Adrenal gland (tissue), 19 donors: ENCODE measurements at regions of chr13 and their contacts with region 1.

Region 1: GRCh38 chr13:21476893-21477472 is 17.9 kb upstream of the ZDHHC20 start:
- DNase-seq: peak; percentile 81 to 93 (median 87)
- H3K4me3 ChIP-seq: peak overlapping the region in 3 of 4 donors; percentile 6 to 56 (median 28)
- H3K27ac ChIP-seq: peak overlapping the region in 1 of 5 donors; percentile 40
- H3K4me1 ChIP-seq: peaks cover 0 to 8% of the 10 kb centered on the region in 2 donors
- H3K27me3 ChIP-seq: no peaks in the 10 kb centered on the region
- CTCF ChIP-seq: peak in 5 of 6 experiments; percentile 89 to 99 (median 96)
- POLR2A ChIP-seq: no peak

Region 2: GRCh38 chr13:20940083-20940880 is 536.7 kb before region 1 on chr13:
- intact Hi-C with region 1: loop called (anchors 5 to 10 kb)
- DNase-seq: no peak
- H3K4me3 ChIP-seq: no peak overlapping the region
- H3K27ac ChIP-seq: no peak overlapping the region
- H3K4me1 ChIP-seq: no peaks in the 10 kb centered on the region
- H3K27me3 ChIP-seq: peaks cover 5% of the 10 kb centered on the region
- CTCF ChIP-seq: no peak
- POLR2A ChIP-seq: no peak

Region 3: DNA sequence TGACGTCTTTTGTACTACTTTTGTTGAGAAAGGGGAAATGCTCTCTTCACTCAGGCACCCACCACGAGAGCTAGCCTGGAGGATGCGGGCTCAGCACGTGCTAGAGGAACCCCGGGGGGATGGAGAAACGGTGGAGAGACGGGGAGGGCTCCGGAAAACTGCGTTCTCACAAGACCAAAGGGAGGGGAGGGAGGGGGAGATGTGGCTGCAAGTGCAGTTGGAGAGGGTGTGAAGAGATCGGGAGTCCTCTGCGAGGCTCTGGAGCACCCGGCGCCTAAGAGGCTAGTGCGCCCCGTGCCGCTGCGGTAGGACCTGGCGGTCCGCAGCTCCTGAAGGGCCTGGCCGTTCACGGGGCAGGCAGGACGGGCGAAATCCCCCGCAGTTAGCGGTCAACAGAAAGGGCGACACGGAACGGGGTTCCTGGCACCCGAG is 531.0 kb before region 1 on chr13:
- intact Hi-C with region 1: loop called in 1 of 2 experiments (anchors 10 kb)
- DNase-seq: peak in 1 of 7 donors; percentile 19
- H3K4me3 ChIP-seq: peak overlapping the region in 1 of 4 donors; percentile 10
- H3K27ac ChIP-seq: no peak overlapping the region
- H3K4me1 ChIP-seq: peaks cover 0 to 4% of the 10 kb centered on the region in 2 donors
- H3K27me3 ChIP-seq: no peaks in the 10 kb centered on the region
- CTCF ChIP-seq: no peak
- POLR2A ChIP-seq: no peak

Region 4: DNA sequence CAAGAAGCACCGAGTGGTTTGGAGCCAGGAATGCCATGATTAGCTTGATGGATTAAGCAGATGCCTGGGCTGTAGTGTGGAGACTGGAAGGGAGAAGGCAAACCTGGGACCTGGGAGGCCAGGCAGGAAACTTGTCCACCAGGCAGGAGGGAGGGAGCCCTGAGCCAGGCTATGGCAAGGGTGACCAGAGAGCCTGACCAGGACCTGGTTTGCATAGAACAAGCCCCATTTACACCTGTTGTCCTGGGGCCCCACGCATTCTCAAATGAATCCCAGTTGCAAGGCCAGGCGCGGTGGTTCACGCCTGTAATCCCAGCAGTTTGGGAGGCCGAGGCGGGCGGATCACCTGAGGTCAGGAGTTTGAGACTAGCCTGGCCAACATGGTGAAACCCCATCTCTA is 365.4 kb before region 1 on chr13:
- intact Hi-C with region 1: loop called in 1 of 2 experiments (anchors 5 kb)
- DNase-seq: no peak
- H3K4me3 ChIP-seq: no peak overlapping the region
- H3K27ac ChIP-seq: no peak overlapping the region
- H3K4me1 ChIP-seq: no peaks in the 10 kb centered on the region
- H3K27me3 ChIP-seq: no peaks in the 10 kb centered on the region
- CTCF ChIP-seq: no peak
- POLR2A ChIP-seq: no peak

Region 5: DNA sequence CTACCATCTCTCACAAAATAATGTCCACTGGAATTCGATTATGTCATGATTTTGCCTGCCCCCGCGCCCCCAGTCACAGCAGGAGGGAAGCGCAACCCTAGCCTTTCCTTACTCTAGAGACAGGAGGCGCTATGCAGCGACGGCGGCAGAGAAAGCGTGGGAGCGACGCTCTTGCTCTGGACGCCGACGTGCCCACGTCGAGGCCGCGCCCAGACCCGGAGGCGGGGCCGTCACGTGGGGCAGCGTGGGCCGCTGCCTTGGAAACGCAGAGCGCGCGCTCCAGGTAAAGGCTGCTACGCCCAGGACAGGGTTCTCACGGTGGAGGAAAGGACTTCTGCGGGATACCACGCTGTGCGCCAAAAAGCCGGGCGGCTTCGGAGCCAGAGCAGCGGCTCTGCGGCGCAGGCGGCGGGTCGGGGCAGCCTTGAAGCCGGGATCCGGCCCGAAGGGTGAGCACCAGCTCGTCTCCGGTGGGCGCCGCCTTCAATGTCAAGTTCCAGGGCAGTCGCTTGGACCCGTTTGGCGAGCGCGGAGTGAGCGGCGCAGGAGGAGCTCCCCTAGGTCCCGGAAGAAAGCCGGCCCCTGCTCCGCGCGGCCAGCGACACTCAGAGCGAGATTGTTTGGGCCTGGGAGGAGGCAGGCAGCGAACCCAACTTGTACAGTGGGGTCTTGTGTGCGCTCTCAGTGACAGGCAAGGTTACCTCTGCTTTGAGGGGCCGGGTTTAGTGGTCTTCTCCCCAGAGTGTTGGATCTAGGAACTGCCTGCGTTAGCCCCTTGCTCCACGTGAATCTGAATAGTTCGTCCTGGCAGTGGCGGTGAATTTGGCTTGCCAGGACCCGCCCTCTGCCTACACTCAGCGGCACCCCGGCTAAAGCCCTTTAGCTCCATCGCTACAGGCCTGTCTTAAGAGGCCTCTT is 178.8 kb before region 1 on chr13:
- intact Hi-C with region 1: loop called (anchors 5 to 10 kb)
- DNase-seq: peak; percentile 81 to 90 (median 84)
- H3K4me3 ChIP-seq: peak overlapping the region; percentile 43 to 98 (median 62)
- H3K27ac ChIP-seq: peak overlapping the region; percentile 27 to 57 (median 46)
- H3K4me1 ChIP-seq: peaks cover 0 to 17% of the 10 kb centered on the region in 2 donors
- H3K27me3 ChIP-seq: no peaks in the 10 kb centered on the region
- CTCF ChIP-seq: peak; percentile 76 to 92 (median 88)
- POLR2A ChIP-seq: peak in 1 of 2 donors; percentile 39

Region 6: GRCh38 chr13:21326155-21327031 is 150.6 kb before region 1 on chr13:
- intact Hi-C with region 1: no loop called
- DNase-seq: peak; percentile 20 to 63 (median 46)
- H3K4me3 ChIP-seq: peak overlapping the region in 2 of 4 donors; percentile 26 to 64
- H3K27ac ChIP-seq: peak overlapping the region in 1 of 5 donors; percentile 54
- H3K4me1 ChIP-seq: peaks cover 0 to 8% of the 10 kb centered on the region in 2 donors
- H3K27me3 ChIP-seq: no peaks in the 10 kb centered on the region
- CTCF ChIP-seq: no peak
- POLR2A ChIP-seq: no peak

Region 7: DNA sequence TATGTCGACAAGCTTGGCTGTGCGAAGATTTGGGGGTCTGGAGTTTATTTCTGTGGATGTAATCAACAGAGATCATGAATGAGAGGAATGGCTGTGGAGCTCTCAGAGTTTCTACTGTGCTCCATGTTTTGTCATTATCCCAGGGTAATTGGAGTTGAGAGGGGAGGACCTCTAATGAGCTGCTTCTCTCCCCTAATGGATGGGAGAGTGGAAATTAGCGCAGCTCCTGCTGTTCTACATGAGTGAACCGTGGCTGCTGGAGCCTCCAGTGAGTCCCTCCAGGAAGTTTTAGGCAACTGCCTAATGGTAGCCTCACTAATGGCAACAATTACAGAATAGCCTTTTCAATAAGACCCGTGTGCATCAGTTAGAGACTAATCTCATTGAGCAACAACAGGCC is 162.6 kb after region 1 on chr13:
- intact Hi-C with region 1: no loop called
- DNase-seq: no peak
- H3K4me3 ChIP-seq: no peak overlapping the region
- H3K27ac ChIP-seq: no peak overlapping the region
- H3K4me1 ChIP-seq: no peaks in the 10 kb centered on the region
- H3K27me3 ChIP-seq: no peaks in the 10 kb centered on the region
- CTCF ChIP-seq: no peak
- POLR2A ChIP-seq: no peak

Region 8: GRCh38 chr13:21657538-21657937 is 180.6 kb after region 1 on chr13:
- intact Hi-C with region 1: no loop called
- DNase-seq: no peak
- H3K4me3 ChIP-seq: no peak overlapping the region
- H3K27ac ChIP-seq: no peak overlapping the region
- H3K4me1 ChIP-seq: no peaks in the 10 kb centered on the region
- H3K27me3 ChIP-seq: no peaks in the 10 kb centered on the region
- CTCF ChIP-seq: no peak
- POLR2A ChIP-seq: no peak